ENCODE measurements at regions of chr11 and their contacts with region 1.

Region 1: DNA sequence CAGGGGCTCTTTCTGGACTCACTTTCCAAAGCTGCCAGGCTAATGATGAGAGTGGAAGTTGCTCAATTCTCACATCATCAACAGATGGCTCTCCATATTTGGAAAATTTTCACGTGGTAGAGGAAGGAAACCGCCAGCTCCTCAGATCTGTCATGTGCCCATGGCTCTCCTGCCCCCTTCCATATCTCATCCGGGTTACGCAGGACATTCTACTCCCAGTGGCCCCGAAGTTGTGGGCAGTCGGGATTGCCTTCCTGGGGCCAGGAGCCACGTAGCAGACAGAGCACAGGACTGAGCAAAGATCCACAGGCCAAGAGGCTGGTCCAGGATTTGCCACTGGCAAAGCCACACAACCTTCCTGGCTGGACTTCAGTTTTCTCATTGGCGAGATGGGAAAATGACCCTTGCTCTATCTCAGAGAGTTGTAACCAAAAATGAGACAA is 38.8 kb downstream of the RPUSD4 start:
- DNase-seq: no peak
- ATAC-seq: no peak
- H3K4me3 ChIP-seq: no peak overlapping the region
- H3K4me3 Mint-ChIP-seq: no peak overlapping the region
- H3K27ac ChIP-seq: no peak overlapping the region
- H3K27ac Mint-ChIP-seq: no peak overlapping the region
- H3K4me1 ChIP-seq: no peaks in the 10 kb centered on the region
- H3K4me1 Mint-ChIP-seq: no peaks in the 10 kb centered on the region
- H3K27me3 ChIP-seq: peaks cover 0 to 13% of the 10 kb centered on the region in 2 experiments
- H3K27me3 Mint-ChIP-seq: peaks cover 12 to 18% of the 10 kb centered on the region in 2 donors

Region 2: GRCh38 chr11:126072141-126072741 is 100.4 kb before region 1 on chr11:
- CTCF ChIA-PET with region 1: no interaction called
- POLR2A ChIA-PET with region 1: interaction called in 1 of 2 experiments, 10 read pairs
- DNase-seq: no peak
- ATAC-seq: no peak
- H3K4me3 ChIP-seq: no peak overlapping the region
- H3K4me3 Mint-ChIP-seq: no peak overlapping the region
- H3K27ac ChIP-seq: no peak overlapping the region
- H3K27ac Mint-ChIP-seq: no peak overlapping the region
- H3K4me1 ChIP-seq: no peaks in the 10 kb centered on the region
- H3K4me1 Mint-ChIP-seq: no peaks in the 10 kb centered on the region
- H3K27me3 ChIP-seq: peaks cover 0 to 15% of the 10 kb centered on the region in 2 experiments
- H3K27me3 Mint-ChIP-seq: peaks cover 3 to 6% of the 10 kb centered on the region in 2 donors

Region 3: DNA sequence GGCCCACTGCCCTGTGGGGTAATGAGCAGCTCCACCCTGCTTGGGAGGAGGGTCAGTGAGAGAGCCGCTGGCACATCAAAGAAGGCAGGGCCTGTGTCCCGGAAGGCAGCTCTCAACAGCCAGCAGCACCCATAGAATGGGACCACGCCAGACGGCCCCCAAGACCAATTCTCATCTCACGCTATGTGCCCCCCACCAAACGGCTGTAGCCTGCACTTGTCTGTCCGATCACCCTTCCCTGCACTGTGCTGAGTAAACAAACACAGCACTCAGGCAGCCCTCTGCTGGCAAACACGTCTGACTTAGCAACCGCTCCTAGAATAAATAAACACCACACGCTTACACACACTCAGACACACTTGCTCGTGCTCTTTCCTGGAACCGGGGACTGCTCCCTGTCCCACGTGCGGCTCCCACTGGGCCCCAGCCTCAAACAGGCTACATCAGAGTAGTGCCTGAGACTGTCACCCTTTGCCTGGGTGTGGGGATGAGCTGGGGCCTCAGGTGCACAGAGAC is 56.7 kb before region 1 on chr11:
- CTCF ChIA-PET with region 1: no interaction called
- POLR2A ChIA-PET with region 1: no interaction called
- DNase-seq: no peak
- ATAC-seq: no peak
- H3K4me3 ChIP-seq: no peak overlapping the region
- H3K4me3 Mint-ChIP-seq: no peak overlapping the region
- H3K27ac ChIP-seq: no peak overlapping the region
- H3K27ac Mint-ChIP-seq: no peak overlapping the region
- H3K4me1 ChIP-seq: no peaks in the 10 kb centered on the region
- H3K4me1 Mint-ChIP-seq: no peaks in the 10 kb centered on the region
- H3K27me3 ChIP-seq: peaks cover 0 to 4% of the 10 kb centered on the region in 2 experiments
- H3K27me3 Mint-ChIP-seq: no peaks in the 10 kb centered on the region

Region 4: DNA sequence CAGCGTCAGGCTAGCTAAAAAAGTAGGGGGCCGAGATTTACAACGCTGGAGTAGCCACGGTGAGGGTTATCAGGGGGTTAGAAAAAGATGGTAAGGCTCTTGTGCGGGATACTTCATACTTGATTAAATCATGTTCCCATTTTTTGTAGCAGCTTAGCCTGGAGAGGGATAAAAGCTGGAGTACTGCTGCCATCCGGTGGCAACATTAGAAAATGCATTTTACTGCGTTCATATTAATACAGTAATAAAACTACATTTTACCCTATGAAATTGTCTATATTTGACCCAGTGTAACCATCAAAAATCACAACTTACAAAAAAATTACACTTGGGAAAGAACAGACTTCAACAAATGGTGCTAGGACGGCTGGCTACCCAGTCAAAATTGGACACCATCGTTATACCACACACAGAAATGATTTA is 21.5 kb after region 1 on chr11:
- CTCF ChIA-PET with region 1: no interaction called
- POLR2A ChIA-PET with region 1: no interaction called
- DNase-seq: peak in 18 of 35 experiments; percentile 6 to 60 (median 23)
- ATAC-seq: peak in 1 of 4 experiments; percentile 42
- H3K4me3 ChIP-seq: no peak overlapping the region
- H3K4me3 Mint-ChIP-seq: no peak overlapping the region
- H3K27ac ChIP-seq: no peak overlapping the region
- H3K27ac Mint-ChIP-seq: no peak overlapping the region
- H3K4me1 ChIP-seq: no peaks in the 10 kb centered on the region
- H3K4me1 Mint-ChIP-seq: no peaks in the 10 kb centered on the region
- H3K27me3 ChIP-seq: no peaks in the 10 kb centered on the region
- H3K27me3 Mint-ChIP-seq: no peaks in the 10 kb centered on the region

Region 5: DNA sequence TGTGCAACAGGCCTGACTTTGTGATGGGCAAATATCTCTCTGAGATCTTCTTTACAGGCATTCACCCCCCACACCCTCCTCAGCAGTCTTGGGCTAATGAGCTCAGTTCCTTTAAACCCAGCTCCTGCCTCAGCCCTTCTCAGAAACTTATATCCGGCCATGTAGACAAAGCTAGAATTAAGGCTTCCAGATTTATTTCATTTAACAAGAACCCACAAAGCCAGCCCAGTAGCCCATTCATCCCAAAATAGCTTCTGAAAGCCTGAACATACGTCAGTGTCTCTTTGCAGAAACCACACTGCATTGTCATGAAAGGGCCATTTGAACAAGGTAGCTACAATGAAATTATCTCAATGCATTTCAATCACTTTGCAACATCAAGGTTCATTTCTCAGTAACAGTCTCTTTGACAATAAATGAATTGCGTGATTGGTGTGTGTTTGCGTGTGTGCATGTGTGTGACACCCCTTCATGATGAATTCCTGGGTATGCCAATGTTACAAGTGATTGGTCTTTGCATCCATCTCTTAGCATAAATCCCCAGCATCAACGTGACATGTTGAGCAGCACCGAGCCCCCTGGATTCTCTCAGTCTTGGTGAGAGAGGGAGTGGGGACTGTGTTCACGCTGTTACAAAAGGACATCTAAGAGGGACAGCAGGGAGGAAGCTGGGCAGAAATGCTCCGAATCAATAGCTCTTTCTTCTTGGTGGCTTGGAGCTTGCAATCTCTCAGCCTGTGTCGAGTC is 528.3 kb after region 1 on chr11:
- CTCF ChIA-PET with region 1: no interaction called
- POLR2A ChIA-PET with region 1: no interaction called
- DNase-seq: no peak
- ATAC-seq: no peak
- H3K4me3 ChIP-seq: no peak overlapping the region
- H3K4me3 Mint-ChIP-seq: no peak overlapping the region
- H3K27ac ChIP-seq: no peak overlapping the region
- H3K27ac Mint-ChIP-seq: no peak overlapping the region
- H3K4me1 ChIP-seq: no peaks in the 10 kb centered on the region
- H3K4me1 Mint-ChIP-seq: no peaks in the 10 kb centered on the region
- H3K27me3 ChIP-seq: peaks cover 0 to 9% of the 10 kb centered on the region in 2 experiments
- H3K27me3 Mint-ChIP-seq: peaks cover 0 to 5% of the 10 kb centered on the region in 2 donors